CD8-positive, alpha-beta memory T cell (primary cell): ENCODE measurements at regions of chr9 and their contacts with region 1.

Region 1: GRCh38 chr9:120904061-120904977 is 22.3 kb downstream of the TRAF1 start:
- DNase-seq: peak; percentile 47 to 85 (median 69)
- H3K4me3 ChIP-seq: no peak overlapping the region
- H3K4me3 Mint-ChIP-seq: peak overlapping the region; percentile 19 to 78 (median 59)
- H3K27ac ChIP-seq: peak overlapping the region; percentile 63
- H3K27ac Mint-ChIP-seq: peak overlapping the region; percentile 92 to 98 (median 96)
- H3K4me1 ChIP-seq: peaks cover 85% of the 10 kb centered on the region
- H3K4me1 Mint-ChIP-seq: peaks cover 74 to 91% (median 87%) of the 10 kb centered on the region in 3 donors
- H3K27me3 ChIP-seq: no peaks in the 10 kb centered on the region
- H3K27me3 Mint-ChIP-seq: no peaks in the 10 kb centered on the region

Region 2: DNA sequence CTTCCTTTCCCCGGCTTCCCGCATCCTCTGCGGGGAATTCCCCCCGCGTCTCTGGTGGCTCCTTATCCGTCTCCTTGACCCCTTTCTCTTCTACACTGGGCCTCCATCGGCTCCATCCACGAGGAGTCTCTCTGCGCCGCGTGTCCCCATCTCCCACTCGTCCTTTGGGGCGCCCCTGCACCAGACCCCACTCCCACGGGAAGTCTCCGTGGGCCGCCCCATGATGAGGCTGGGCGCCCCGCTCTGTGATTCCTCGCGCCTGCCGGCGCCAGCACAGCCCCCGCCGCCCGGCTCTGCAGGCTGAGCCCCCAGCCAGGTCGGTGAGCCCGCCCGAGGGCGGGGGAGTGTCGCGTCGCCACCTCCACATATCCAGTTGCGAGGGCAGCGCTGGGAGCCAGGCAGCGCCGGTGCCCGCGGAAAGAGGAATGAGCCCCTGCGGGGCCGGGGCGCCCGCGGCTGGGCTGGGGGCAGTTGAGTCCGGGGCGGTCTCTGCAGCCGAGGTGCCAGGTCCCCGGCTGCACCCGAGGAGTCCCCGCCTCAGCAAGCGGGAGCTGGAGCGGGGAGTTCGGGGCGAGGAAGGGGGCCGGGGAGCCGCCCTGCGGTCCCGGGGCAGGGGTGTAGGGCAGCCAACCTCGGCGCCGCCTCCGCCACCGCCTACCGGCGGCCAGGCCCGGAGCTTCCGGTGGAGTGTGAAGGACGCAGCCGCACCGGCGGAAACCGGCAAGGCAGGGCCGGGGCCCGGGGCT is 24.3 kb after region 1 on chr9:
- CTCF ChIA-PET with region 1: interaction called, 6 read pairs
- POLR2A ChIA-PET with region 1: interaction called, 67 read pairs
- DNase-seq: peak; percentile 65 to 89 (median 79)
- H3K4me3 ChIP-seq: peak overlapping the region; percentile 76
- H3K4me3 Mint-ChIP-seq: peak overlapping the region; percentile 91 to 99 (median 96)
- H3K27ac ChIP-seq: peak overlapping the region; percentile 85
- H3K27ac Mint-ChIP-seq: peak overlapping the region; percentile 95 to 100 (median 99)
- H3K4me1 ChIP-seq: peaks cover 86% of the 10 kb centered on the region
- H3K4me1 Mint-ChIP-seq: peaks cover 82 to 90% (median 85%) of the 10 kb centered on the region in 3 donors
- H3K27me3 ChIP-seq: no peaks in the 10 kb centered on the region
- H3K27me3 Mint-ChIP-seq: no peaks in the 10 kb centered on the region

Region 3: DNA sequence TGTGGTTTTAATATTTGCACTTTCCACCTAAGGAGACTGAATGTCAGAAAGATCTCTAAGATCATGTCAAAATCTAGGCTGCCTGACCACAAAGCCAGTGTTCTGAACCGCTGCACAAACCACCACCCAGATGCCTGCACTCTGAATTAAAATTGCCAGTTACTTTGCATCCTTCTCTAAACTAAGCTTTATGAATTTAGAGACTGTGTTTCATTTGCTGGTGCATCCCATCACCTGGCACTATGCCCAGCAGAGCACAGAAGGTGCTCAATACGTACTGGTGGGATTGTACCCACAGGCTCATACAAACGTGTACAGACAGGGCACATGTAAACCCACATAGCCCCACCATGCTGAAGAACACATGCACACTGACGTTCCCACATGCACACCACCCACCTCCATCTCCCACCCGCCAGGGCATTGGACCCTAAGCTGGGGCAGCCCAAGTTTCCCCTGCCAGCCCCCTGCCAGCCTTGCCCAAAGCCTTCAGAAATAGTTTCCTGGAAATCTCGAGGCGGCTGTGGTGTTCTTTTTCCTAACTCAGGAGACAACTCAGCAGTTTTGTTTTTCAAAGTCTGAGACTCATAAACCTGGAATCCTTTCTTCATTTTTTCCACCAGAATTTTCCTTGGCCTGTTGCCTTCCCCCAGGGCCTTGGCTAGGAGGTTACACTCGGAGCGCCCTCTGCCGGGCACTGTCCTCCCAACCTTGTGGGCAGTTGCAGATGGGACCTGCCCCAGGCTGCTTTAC is 31.9 kb after region 1 on chr9:
- CTCF ChIA-PET with region 1: interaction called, 27 read pairs
- POLR2A ChIA-PET with region 1: interaction called, 7 read pairs
- DNase-seq: peak; percentile 78 to 90 (median 85)
- H3K4me3 ChIP-seq: peak overlapping the region; percentile 10
- H3K4me3 Mint-ChIP-seq: peak overlapping the region; percentile 3 to 85 (median 60)
- H3K27ac ChIP-seq: peak overlapping the region; percentile 52
- H3K27ac Mint-ChIP-seq: peak overlapping the region; percentile 88 to 96 (median 92)
- H3K4me1 ChIP-seq: peaks cover 68% of the 10 kb centered on the region
- H3K4me1 Mint-ChIP-seq: peaks cover 58 to 62% (median 58%) of the 10 kb centered on the region in 3 donors
- H3K27me3 ChIP-seq: no peaks in the 10 kb centered on the region
- H3K27me3 Mint-ChIP-seq: no peaks in the 10 kb centered on the region